Left colon (tissue), 2 donors: ENCODE measurements at regions of chr20 and their contacts with region 1.

Region 1: GRCh38 chr20:41095110-41095969 is 42.0 kb upstream of the PLCG1 start:
- DNase-seq: peak in 1 of 2 donors; percentile 60
- ATAC-seq: peak; percentile 78

Region 2: GRCh38 chr20:40967700-40968099 is 127.6 kb before region 1 on chr20:
- intact Hi-C with region 1: loop called in 1 of 2 experiments (anchors 2 kb)
- DNase-seq: no peak
- ATAC-seq: no peak

Region 3: GRCh38 chr20:40990542-40991120 is 104.7 kb before region 1 on chr20:
- intact Hi-C with region 1: loop called (anchors 5 to 10 kb)
- DNase-seq: peak; percentile 73 to 83
- ATAC-seq: peak; percentile 99